Activated CD4-positive, alpha-beta T cell treated with anti-CD3 and anti-CD28 coated beads, Interleukin-2, amount 10 ng/mL, durations not matched to agents 24 days and 14 days (primary cell): ENCODE measurements at regions of chr6 and their contacts with region 1.

Region 1: GRCh38 chr6:90144396-90144795 is 152.2 kb downstream of the BACH2 start:
- DNase-seq: no peak
- H3K4me3 Mint-ChIP-seq: peak overlapping the region; percentile 59
- H3K27ac Mint-ChIP-seq: peak overlapping the region; percentile 92
- H3K4me1 Mint-ChIP-seq: peaks cover 54% of the 10 kb centered on the region
- H3K27me3 Mint-ChIP-seq: no peaks in the 10 kb centered on the region

Region 2: GRCh38 chr6:90103056-90103800 is 41.2 kb before region 1 on chr6:
- intact Hi-C with region 1: loop called (anchors 1 kb)
- DNase-seq: peak; percentile 73
- H3K4me3 Mint-ChIP-seq: peak overlapping the region; percentile 64
- H3K27ac Mint-ChIP-seq: peak overlapping the region; percentile 88
- H3K4me1 Mint-ChIP-seq: peaks cover 60% of the 10 kb centered on the region
- H3K27me3 Mint-ChIP-seq: no peaks in the 10 kb centered on the region

Region 3: DNA sequence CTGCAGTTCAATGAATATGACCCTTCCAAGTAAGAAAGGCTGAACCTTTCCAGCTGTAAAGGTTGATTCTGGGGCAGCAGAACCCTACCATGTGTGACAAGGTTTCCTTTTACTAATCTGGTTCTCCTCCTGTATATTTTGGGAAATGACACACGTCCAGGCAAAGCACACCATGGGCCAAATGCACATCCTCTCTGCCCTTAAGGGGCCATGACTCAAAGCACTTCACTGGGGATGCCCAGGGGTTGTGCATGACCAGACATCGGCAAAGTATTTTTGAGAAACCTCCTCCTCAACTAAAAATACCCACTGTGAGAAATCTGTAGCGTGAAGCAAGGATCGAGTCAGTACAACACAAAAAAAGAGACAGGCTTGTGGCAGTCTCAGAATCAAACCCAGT is 22.4 kb before region 1 on chr6:
- intact Hi-C with region 1: loop called (anchors 1 kb)
- DNase-seq: no peak
- H3K4me3 Mint-ChIP-seq: peak overlapping the region; percentile 40
- H3K27ac Mint-ChIP-seq: peak overlapping the region; percentile 79
- H3K4me1 Mint-ChIP-seq: peaks cover 41% of the 10 kb centered on the region
- H3K27me3 Mint-ChIP-seq: no peaks in the 10 kb centered on the region

Region 4: DNA sequence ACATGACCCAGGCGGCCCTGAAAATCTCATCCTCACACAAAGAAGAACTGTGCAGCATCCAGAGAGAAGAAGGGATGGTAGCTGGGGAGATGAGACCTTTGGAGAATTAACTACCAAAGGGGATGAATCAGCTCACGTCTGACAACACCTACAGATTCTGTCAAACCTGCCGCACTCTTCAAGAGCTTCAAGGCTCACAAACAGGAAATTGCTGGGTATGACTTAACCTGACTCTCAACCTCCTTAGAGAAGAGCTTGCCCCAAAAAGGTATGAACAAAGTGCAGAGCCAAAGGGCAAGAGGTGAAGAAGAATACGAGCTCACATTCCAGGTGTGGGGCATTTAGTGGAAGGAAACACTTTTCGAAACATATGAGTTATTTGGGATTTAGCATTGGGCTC is 12.5 kb after region 1 on chr6:
- intact Hi-C with region 1: loop called (anchors 1 kb)
- DNase-seq: peak; percentile 84
- H3K4me3 Mint-ChIP-seq: peak overlapping the region; percentile 62
- H3K27ac Mint-ChIP-seq: peak overlapping the region; percentile 84
- H3K4me1 Mint-ChIP-seq: peaks cover 57% of the 10 kb centered on the region
- H3K27me3 Mint-ChIP-seq: no peaks in the 10 kb centered on the region

Region 5: GRCh38 chr6:90179190-90180169 is 35.1 kb after region 1 on chr6:
- intact Hi-C with region 1: loop called (anchors 1 kb)
- DNase-seq: peak; percentile 75
- H3K4me3 Mint-ChIP-seq: peak overlapping the region; percentile 11
- H3K27ac Mint-ChIP-seq: no peak overlapping the region
- H3K4me1 Mint-ChIP-seq: peaks cover 68% of the 10 kb centered on the region
- H3K27me3 Mint-ChIP-seq: no peaks in the 10 kb centered on the region

Region 6: GRCh38 chr6:90216072-90216977 is 71.9 kb after region 1 on chr6:
- intact Hi-C with region 1: loop called (anchors 1 kb)
- DNase-seq: peak; percentile 79
- H3K4me3 Mint-ChIP-seq: peak overlapping the region; percentile 48
- H3K27ac Mint-ChIP-seq: no peak overlapping the region
- H3K4me1 Mint-ChIP-seq: peaks cover 40% of the 10 kb centered on the region
- H3K27me3 Mint-ChIP-seq: no peaks in the 10 kb centered on the region